ENCODE measurements at regions of chr9 and their contacts with region 1.

Region 1: DNA sequence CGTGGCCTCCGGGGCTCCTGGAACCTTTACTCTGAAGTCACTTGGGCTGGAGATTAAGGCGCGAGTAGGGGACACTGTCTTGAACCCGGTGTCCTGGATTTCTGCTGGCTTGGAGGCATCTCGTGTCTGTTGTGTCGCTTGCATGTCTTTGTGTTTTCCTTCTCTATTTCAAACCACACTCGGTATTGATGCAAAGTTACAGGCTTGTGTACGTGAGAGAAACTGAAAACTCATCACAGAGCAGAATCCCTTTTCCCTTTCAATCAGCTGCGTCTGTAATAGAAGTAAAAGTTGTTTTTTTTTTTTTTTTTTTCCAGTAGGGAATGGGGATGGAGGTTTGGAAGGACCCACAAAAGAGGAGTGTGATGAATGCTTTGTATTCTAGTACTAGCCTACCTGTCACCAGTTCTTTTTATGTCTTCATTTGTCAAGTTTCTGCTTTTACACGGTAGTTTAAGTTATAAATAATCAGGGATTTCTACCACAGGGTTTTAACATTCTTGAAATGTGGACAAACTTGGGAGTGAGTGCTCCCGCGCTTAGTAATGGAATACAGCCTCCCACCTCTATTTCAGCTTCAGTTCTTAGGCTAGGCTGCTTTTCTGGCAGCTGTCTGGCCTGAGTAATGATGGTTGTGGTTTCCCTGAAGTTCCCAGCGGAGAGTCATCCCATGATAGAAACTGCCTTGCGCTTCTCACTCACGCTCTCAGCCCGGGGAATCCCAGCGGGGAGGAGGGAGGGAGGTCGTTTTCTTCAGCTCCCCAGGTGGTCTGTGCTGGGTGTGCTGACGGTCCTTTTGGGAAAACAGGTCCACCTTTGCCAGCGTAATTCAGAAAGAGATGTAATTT is 763 bp downstream of the TJP2 start:
- DNase-seq: peak; percentile 79
- ATAC-seq: peak; percentile 81
- H3K4me3 Mint-ChIP-seq: peak overlapping the region; percentile 74
- H3K27ac Mint-ChIP-seq: peak overlapping the region; percentile 83
- H3K4me1 Mint-ChIP-seq: peaks cover 48% of the 10 kb centered on the region
- H3K27me3 Mint-ChIP-seq: peaks cover 36% of the 10 kb centered on the region

Region 2: DNA sequence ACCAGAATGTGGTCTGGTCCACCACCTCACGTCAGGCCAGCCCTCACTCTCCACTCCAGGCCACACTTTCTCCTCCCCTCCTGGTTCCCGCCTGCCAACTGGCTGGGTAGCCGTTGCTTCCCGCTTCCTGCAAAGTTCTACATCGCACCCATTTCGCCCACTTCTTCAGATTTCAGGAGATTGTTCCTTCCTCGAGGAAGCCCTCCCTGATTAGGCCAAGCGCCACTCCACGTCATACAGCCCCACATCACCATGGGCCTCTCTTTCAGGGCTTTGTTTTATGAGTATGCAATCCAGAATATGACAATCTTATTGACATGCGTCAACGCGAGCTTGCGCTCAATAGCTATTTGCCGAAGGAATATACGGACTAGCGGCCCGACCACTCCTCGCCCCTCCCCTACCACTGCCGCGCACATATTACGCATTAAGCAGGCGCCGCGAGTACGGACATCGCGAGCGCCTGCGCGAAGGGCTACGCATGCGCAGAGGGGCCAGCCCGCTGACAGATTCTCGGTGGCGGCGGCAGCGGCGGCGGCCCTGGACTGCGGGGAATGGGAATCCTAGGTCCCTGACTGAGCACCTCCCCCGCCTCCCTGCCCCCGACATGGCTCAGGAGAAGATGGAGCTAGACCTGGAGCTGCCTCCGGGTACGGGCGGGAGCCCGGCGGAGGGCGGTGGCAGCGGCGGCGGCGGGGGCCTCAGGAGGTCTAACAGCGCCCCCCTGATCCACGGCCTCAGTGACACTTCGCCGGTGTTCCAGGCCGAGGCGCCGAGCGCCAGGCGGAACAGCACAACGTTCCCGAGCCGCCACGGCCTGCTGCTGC is 395.1 kb before region 1 on chr9:
- CTCF ChIA-PET with region 1: no interaction called
- POLR2A ChIA-PET with region 1: no interaction called
- intact Hi-C with region 1: loop called in 1 of 2 experiments (anchors 5 kb)
- DNase-seq: peak; percentile 96
- ATAC-seq: peak; percentile 87
- H3K4me3 Mint-ChIP-seq: no peak overlapping the region
- H3K27ac Mint-ChIP-seq: no peak overlapping the region
- H3K4me1 Mint-ChIP-seq: peaks cover 11% of the 10 kb centered on the region
- H3K27me3 Mint-ChIP-seq: peaks cover 6% of the 10 kb centered on the region

Region 3: GRCh38 chr9:68949271-68950000 is 225.4 kb before region 1 on chr9:
- CTCF ChIA-PET with region 1: no interaction called
- POLR2A ChIA-PET with region 1: no interaction called
- intact Hi-C with region 1: loop called in 1 of 2 experiments (anchors 10 kb)
- DNase-seq: peak; percentile 55
- ATAC-seq: no peak
- H3K4me3 Mint-ChIP-seq: no peak overlapping the region
- H3K27ac Mint-ChIP-seq: peak overlapping the region; percentile 48
- H3K4me1 Mint-ChIP-seq: peaks cover 42% of the 10 kb centered on the region
- H3K27me3 Mint-ChIP-seq: peaks cover 13% of the 10 kb centered on the region

Region 4: GRCh38 chr9:69004836-69005235 is 170.0 kb before region 1 on chr9:
- CTCF ChIA-PET with region 1: no interaction called
- POLR2A ChIA-PET with region 1: no interaction called
- intact Hi-C with region 1: no loop called
- DNase-seq: no peak
- ATAC-seq: no peak
- H3K4me3 Mint-ChIP-seq: no peak overlapping the region
- H3K27ac Mint-ChIP-seq: no peak overlapping the region
- H3K4me1 Mint-ChIP-seq: no peaks in the 10 kb centered on the region
- H3K27me3 Mint-ChIP-seq: peaks cover 2% of the 10 kb centered on the region

Region 5: GRCh38 chr9:69121828-69122548 is 52.9 kb before region 1 on chr9:
- CTCF ChIA-PET with region 1: interaction called, 3 read pairs
- POLR2A ChIA-PET with region 1: no interaction called
- intact Hi-C with region 1: loop called (anchors 5 kb)
- DNase-seq: peak; percentile 68
- ATAC-seq: peak; percentile 75
- H3K4me3 Mint-ChIP-seq: peak overlapping the region; percentile 77
- H3K27ac Mint-ChIP-seq: peak overlapping the region; percentile 52
- H3K4me1 Mint-ChIP-seq: peaks cover 16% of the 10 kb centered on the region
- H3K27me3 Mint-ChIP-seq: peaks cover 2% of the 10 kb centered on the region

Region 6: GRCh38 chr9:69822091-69822750 is 647.4 kb after region 1 on chr9:
- CTCF ChIA-PET with region 1: no interaction called
- POLR2A ChIA-PET with region 1: no interaction called
- intact Hi-C with region 1: loop called in 1 of 2 experiments (anchors 10 kb)
- DNase-seq: no peak
- ATAC-seq: peak; percentile 82
- H3K4me3 Mint-ChIP-seq: no peak overlapping the region
- H3K27ac Mint-ChIP-seq: no peak overlapping the region
- H3K4me1 Mint-ChIP-seq: peaks cover 26% of the 10 kb centered on the region
- H3K27me3 Mint-ChIP-seq: peaks cover 26% of the 10 kb centered on the region

Region 7: GRCh38 chr9:70563431-70564204 is 1388.8 kb after region 1 on chr9:
- CTCF ChIA-PET with region 1: no interaction called
- POLR2A ChIA-PET with region 1: no interaction called
- intact Hi-C with region 1: loop called in 1 of 2 experiments (anchors 10 kb)
- DNase-seq: peak; percentile 72
- ATAC-seq: peak; percentile 93
- H3K4me3 Mint-ChIP-seq: peak overlapping the region; percentile 40
- H3K27ac Mint-ChIP-seq: peak overlapping the region; percentile 95
- H3K4me1 Mint-ChIP-seq: peaks cover 45% of the 10 kb centered on the region
- H3K27me3 Mint-ChIP-seq: no peaks in the 10 kb centered on the region